Dorsolateral prefrontal cortex (tissue), 120 donors: ENCODE measurements at regions of chr9 and their contacts with region 1.

Region 1: GRCh38 chr9:131046581-131047202 is 37.7 kb downstream of the LAMC3 start:
- DNase-seq: peak; percentile 49 to 82 (median 64)
- H3K4me3 ChIP-seq: peak overlapping the region in 30 of 59 donors; percentile 6 to 52 (median 30)
- H3K27ac ChIP-seq: peak overlapping the region in 1 of 59 donors; percentile 46
- H3K27me3 ChIP-seq: no peaks in the 10 kb centered on the region
- CTCF ChIP-seq: peak; percentile 63 to 99 (median 95)

Region 2: GRCh38 chr9:130701056-130702022 is 345.4 kb before region 1 on chr9:
- intact Hi-C with region 1: loop called (anchors 5 kb)
- DNase-seq: peak; percentile 51 to 80 (median 73)
- H3K4me3 ChIP-seq: peak overlapping the region in 2 of 59 donors; percentile 2 to 7
- H3K27ac ChIP-seq: peak overlapping the region in 51 of 59 donors; percentile 5 to 80 (median 63)
- H3K27me3 ChIP-seq: no peaks in the 10 kb centered on the region
- CTCF ChIP-seq: peak; percentile 78 to 98 (median 94)

Region 3: GRCh38 chr9:130707225-130707976 is 339.3 kb before region 1 on chr9:
- intact Hi-C with region 1: loop called (anchors 5 kb)
- DNase-seq: peak in 5 of 10 donors; percentile 28 to 66 (median 47)
- H3K4me3 ChIP-seq: no peak overlapping the region
- H3K27ac ChIP-seq: peak overlapping the region in 1 of 59 donors; percentile 20
- H3K27me3 ChIP-seq: no peaks in the 10 kb centered on the region
- CTCF ChIP-seq: peak; percentile 70 to 94 (median 83)

Region 4: DNA sequence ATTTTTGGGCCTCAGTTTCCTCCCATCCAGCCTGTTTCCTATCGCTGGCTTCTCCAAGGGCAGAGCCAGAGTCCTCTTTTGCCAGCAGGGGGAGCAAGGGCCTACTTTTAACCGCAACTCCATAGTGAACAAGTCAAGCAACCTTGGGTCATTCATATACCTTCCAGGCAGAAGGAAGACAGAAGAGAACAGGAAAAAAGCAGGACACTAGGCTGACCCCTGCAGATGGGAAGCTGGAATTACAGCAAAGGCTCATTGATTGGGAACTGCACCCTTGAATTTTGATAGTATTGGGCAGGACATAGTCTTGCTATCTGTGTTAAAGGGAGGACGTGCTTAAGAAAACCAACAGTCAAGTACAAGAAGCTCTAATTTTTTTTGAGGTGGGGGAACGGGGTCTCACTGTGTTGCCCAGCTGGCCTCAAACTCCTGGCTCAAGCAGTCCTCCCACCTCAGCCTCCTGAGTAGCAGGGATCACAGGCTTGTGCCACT is 180.2 kb before region 1 on chr9:
- intact Hi-C with region 1: loop called (anchors 2 kb)
- DNase-seq: peak in 9 of 10 donors; percentile 50 to 82 (median 65)
- H3K4me3 ChIP-seq: no peak overlapping the region
- H3K27ac ChIP-seq: peak overlapping the region in 15 of 59 donors; percentile 11 to 66 (median 28)
- H3K27me3 ChIP-seq: no peaks in the 10 kb centered on the region
- CTCF ChIP-seq: peak; percentile 60 to 89 (median 78)

Region 5: DNA sequence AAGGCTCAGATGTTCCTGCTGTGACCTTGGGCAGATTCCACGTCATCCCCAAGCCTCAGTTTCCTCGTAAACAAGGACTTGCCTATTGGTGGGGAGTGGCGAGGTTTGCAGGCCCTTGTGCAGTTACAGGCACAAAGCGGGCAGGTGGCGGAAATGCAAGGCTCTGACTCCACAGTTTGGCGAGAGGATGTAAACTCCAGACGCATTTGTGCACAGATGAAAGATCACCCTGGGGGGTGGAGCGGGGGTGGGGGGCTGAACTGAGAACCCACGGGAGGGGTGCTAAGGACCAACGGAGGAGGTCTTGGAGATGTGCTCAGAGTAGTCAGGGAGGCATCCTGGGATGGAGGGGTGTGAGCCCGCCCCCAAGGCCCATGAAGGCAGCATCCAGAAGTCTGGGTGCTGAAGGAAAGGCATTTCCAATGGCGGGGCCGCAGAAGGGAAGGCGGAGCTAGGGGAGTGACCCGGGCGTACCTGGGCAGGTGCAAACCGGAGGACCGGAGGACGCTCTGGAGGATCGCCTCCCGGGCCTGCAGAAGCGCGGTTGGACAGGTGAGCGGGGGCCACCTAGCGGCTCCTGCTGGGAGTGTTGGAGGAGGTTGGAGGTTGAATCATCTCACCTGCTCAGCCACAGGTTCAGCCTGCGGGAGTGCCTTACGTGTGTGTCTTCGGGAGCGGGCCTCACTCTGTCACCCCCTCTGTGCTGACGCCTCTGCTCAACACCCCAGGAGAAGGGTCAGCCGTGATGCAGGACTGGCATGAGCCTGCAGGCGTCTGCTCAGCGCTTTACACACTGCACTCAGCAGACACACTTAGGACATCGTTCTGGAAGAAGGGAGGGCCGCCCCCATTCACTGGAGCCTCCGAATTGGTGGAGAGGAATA is 105.8 kb before region 1 on chr9:
- intact Hi-C with region 1: loop called in 1 of 2 experiments (anchors 5 kb)
- DNase-seq: peak in 9 of 10 donors; percentile 47 to 80 (median 67)
- H3K4me3 ChIP-seq: peak overlapping the region in 3 of 59 donors; percentile 10 to 32 (median 17)
- H3K27ac ChIP-seq: no peak overlapping the region
- H3K27me3 ChIP-seq: peaks cover 0 to 60% (median 34%) of the 10 kb centered on the region in 45 donors
- CTCF ChIP-seq: peak; percentile 53 to 94 (median 84)

Region 6: DNA sequence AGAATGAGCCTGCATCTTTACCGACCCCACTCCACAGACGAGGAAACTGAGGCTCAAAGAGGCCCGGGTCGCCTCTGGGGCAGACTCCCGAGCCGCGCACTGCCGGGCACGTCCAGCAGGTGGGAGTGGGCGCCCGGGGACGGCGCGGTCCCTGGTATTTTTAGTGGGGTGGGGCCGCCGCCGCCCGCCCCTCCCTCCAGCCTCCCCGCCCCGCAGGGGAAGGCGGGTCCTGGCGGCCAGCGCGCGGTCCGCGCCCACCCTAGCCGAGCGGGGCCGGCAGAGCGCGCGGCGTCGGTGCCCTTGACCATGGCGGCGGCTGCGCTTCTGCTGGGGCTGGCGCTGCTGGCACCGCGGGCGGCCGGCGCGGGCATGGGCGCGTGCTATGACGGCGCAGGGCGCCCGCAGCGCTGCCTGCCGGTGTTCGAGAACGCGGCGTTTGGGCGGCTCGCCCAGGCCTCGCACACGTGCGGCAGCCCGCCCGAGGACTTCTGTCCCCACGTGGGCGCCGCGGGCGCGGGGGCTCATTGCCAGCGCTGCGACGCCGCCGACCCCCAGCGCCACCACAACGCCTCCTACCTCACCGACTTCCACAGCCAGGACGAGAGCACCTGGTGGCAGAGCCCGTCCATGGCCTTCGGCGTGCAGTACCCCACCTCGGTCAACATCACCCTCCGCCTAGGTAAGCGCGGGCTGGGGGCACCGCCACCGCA is 37.6 kb before region 1 on chr9 and contains the start of gene LAMC3:
- intact Hi-C with region 1: loop called in 1 of 2 experiments (anchors 5 kb)
- DNase-seq: no peak
- H3K4me3 ChIP-seq: peak within 1 kb of the TSS in 58 of 59 donors; percentile 15 to 61 (median 42)
- H3K27ac ChIP-seq: peak within 1 kb of the TSS in 1 of 59 donors; percentile 42
- H3K27me3 ChIP-seq: peaks cover 0 to 22% (median 4%) of the 10 kb centered on the region in 45 donors
- CTCF ChIP-seq: peak in 53 of 56 donors; percentile 6 to 66 (median 43)
- total RNA-seq, gene LAMC3: 1.4 to 14.2 (median 4.7) TPM

Region 7: DNA sequence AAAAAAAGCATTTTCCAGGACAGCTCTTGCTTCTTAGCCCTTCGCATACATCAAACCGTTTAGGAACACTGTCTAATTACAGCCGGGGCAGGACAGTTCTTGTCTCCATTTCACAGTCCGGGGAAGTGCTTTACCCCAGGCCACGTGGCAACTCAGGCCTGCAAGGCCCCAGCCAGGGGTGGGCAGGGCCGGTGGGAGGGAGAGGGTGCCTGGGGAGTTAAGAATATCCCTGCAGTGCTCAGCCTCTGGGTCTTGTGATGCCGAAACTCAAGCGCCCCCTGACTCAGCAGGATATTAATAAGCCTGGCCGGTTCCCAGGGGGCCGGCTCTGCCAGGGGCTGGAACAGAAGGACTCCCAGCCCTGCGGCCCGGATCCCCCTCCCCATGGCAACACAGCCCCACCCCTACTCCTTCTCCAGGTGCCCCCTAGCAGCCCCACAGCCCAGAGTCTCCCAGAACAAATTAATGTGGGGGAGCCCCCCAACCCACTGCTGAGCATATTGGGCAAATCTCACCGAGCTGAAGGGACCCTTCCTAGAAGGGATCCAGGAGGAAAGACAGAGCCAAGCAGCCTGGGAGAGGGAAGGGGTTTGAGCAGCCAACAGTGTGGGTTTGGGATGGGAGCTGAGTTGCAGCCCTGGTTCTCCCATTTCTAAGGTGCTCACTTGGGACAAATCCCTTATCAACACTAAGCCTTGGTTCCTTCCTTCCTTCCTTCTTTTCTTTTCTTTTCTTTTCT is 288.1 kb after region 1 on chr9:
- intact Hi-C with region 1: loop called in 1 of 2 experiments (anchors 10 kb)
- DNase-seq: peak in 1 of 10 donors; percentile 38
- H3K4me3 ChIP-seq: no peak overlapping the region
- H3K27ac ChIP-seq: no peak overlapping the region
- H3K27me3 ChIP-seq: no peaks in the 10 kb centered on the region
- CTCF ChIP-seq: no peak